IMR-90 (cell line): ENCODE measurements at regions of chr4 and their contacts with region 1.

Region 1: DNA sequence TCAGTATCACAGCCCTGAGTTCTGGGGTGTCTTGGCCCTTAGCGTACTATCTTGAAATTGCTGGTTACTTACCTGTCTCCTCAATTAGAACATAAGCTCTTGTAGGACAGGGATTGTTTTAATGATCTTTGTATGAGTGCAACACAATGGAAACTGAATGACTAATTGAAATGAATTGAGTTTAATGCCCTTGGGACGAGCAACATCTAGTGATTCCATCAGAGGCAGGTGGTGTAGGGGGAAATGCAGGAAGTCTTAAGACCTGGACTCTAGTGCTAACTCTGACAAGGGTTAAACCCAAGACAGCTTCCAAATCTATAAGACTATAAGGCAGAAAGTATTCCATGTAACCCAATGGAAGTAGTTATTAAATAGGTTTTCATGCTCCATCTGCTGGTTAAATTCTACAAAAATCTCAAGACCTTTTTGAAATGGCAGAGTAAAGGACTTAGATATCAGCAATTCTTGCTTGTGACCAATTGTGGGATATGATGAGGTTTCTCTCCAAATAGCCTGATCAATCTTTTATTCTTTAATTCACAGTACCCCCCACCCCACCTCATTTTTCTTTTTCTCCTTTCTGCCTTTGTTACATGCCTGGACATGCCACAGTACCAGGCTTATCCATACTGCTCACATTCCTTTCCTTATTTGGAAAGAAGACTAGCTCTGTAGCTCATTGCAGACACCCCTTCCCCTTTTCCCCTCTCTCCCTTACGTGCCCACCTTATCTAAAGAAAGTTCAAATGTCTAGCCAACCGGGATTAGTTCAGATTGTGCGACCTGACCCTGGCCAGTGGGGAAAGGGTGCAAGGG is 340.8 kb downstream of the PAPSS1 start:
- DNase-seq: peak; percentile 47
- ATAC-seq: peak; percentile 80
- H3K4me3 ChIP-seq: no peak overlapping the region
- H3K27ac ChIP-seq: peak overlapping the region; percentile 35; the same call in 1 of the 2 replicates
- H3K4me1 ChIP-seq: peaks cover 5% of the 10 kb centered on the region
- H3K27me3 ChIP-seq: no peaks in the 10 kb centered on the region
- CTCF ChIP-seq: peak; percentile 27; the same call in 1 of the 2 replicates
- POLR2A ChIP-seq: no peak
- RAD21 ChIP-seq: 0 out of 2 replicates have a peak, but pooled peaks have one; percentile 26

Region 2: DNA sequence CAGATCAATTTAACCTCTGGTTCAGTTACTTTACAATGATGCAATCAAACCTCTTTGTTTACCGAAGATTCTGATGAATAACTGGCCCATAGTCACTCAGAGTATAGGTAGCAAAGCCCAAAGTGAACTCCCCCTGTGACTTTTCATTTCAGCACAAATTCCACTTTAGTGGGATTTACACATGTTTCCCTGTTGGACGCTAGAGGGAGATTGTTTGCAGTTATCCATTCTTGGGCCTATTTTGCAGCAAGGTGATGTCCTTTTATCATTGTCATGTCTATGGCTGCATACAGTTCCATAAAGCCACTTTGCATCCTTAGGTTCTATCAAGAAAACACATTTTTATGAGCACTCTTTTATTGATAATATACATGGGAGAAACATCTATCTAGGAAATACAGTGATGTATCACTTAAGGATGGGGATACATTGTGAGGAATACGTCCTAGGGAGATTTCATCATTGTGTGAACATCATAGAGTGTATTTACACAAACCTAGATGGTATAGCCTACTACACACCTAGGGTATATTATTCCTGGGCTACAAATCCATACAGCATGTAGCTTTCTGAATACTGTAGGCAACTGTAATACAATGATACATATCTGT is 328.6 kb before region 1 on chr4:
- CTCF ChIA-PET with region 1: no interaction called
- POLR2A ChIA-PET with region 1: no interaction called
- dilution Hi-C with region 1: no loop called
- in situ Hi-C with region 1: no loop called
- intact Hi-C with region 1: loop called (anchors 5 kb)
- DNase-seq: peak; percentile 10
- ATAC-seq: no peak
- H3K4me3 ChIP-seq: no peak overlapping the region
- H3K27ac ChIP-seq: no peak overlapping the region
- H3K4me1 ChIP-seq: no peaks in the 10 kb centered on the region
- H3K27me3 ChIP-seq: no peaks in the 10 kb centered on the region
- CTCF ChIP-seq: peak; percentile 48
- POLR2A ChIP-seq: no peak
- RAD21 ChIP-seq: peak; percentile 43

Region 3: DNA sequence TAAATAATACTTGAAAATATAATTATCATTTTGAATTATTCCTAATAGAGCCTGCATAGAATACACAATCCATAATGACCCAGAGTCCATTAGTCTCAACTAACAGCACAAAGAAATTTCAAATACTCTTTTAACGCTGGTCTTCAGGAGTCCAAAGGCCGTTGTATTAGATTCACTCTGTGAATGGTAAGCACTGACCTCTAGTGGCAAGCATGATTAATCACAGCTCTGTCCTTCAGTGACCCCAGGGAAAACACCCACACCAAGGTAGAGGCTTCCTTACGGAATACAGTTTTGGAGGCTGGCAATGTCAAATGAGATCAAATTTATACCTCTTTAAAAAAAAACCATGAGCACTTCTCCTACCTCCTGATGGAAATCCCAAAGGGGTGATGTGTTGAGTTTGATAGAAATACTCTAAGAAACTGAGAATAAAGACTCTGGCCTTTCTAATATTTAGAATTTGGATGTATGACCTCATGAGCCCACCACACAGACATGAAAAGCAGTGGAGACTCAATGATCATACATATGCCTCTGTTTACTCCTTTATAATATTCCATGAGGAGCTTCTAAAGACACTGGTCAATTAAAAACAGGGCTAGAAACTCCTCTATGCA is 196.0 kb before region 1 on chr4:
- CTCF ChIA-PET with region 1: no interaction called
- POLR2A ChIA-PET with region 1: no interaction called
- dilution Hi-C with region 1: no loop called
- in situ Hi-C with region 1: no loop called
- intact Hi-C with region 1: loop called (anchors 5 kb)
- DNase-seq: peak; percentile 58
- ATAC-seq: peak; percentile 98
- H3K4me3 ChIP-seq: no peak overlapping the region
- H3K27ac ChIP-seq: no peak overlapping the region
- H3K4me1 ChIP-seq: no peaks in the 10 kb centered on the region
- H3K27me3 ChIP-seq: 0 out of 2 replicates have a peak, but pooled peaks cover 1% of the 10 kb centered on the region
- CTCF ChIP-seq: peak; percentile 76
- POLR2A ChIP-seq: no peak
- RAD21 ChIP-seq: peak; percentile 63

Region 4: DNA sequence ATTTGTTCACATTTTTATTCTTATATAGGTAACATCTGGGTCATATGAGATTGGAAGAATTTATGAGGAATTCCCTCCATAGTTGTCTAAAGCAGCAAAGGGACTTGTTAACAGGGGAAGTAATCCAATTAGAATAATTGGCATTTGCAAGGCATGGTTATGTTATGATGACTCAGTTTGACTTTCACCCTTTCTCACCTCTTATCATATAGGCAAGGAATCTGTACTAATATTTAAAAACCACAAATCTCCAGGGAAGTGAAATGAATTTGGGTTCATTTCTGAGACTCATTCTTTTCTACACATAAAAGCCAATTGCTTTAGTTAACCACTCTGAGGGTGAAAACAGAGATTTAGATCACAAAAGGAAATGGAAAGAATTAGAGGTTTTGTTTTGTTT is 61.7 kb before region 1 on chr4:
- CTCF ChIA-PET with region 1: no interaction called
- POLR2A ChIA-PET with region 1: no interaction called
- dilution Hi-C with region 1: no loop called
- in situ Hi-C with region 1: no loop called
- intact Hi-C with region 1: loop called (anchors 10 kb)
- DNase-seq: no peak
- ATAC-seq: no peak
- H3K4me3 ChIP-seq: no peak overlapping the region
- H3K27ac ChIP-seq: no peak overlapping the region
- H3K4me1 ChIP-seq: no peaks in the 10 kb centered on the region
- H3K27me3 ChIP-seq: 0 out of 2 replicates have a peak, but pooled peaks cover 3% of the 10 kb centered on the region
- CTCF ChIP-seq: no peak
- POLR2A ChIP-seq: no peak
- RAD21 ChIP-seq: no peak

Region 5: GRCh38 chr4:107392951-107393350 is 13.7 kb after region 1 on chr4:
- CTCF ChIA-PET with region 1: no interaction called
- POLR2A ChIA-PET with region 1: interaction called, 12 read pairs
- dilution Hi-C with region 1: no loop called
- in situ Hi-C with region 1: no loop called
- intact Hi-C with region 1: no loop called
- DNase-seq: peak; percentile 1
- ATAC-seq: peak; percentile 61
- H3K4me3 ChIP-seq: no peak overlapping the region
- H3K27ac ChIP-seq: no peak overlapping the region
- H3K4me1 ChIP-seq: no peaks in the 10 kb centered on the region
- H3K27me3 ChIP-seq: no peaks in the 10 kb centered on the region
- CTCF ChIP-seq: no peak
- POLR2A ChIP-seq: no peak
- RAD21 ChIP-seq: no peak

Region 6: GRCh38 chr4:107736924-107737448 is 357.7 kb after region 1 on chr4:
- CTCF ChIA-PET with region 1: no interaction called
- POLR2A ChIA-PET with region 1: no interaction called
- dilution Hi-C with region 1: no loop called
- in situ Hi-C with region 1: no loop called
- intact Hi-C with region 1: loop called (anchors 10 kb)
- DNase-seq: peak; percentile 57
- ATAC-seq: peak; percentile 73
- H3K4me3 ChIP-seq: no peak overlapping the region
- H3K27ac ChIP-seq: no peak overlapping the region
- H3K4me1 ChIP-seq: peaks cover 8% of the 10 kb centered on the region
- H3K27me3 ChIP-seq: peaks cover 4% of the 10 kb centered on the region; the same call in 1 of the 2 replicates
- CTCF ChIP-seq: peak; percentile 70
- POLR2A ChIP-seq: no peak
- RAD21 ChIP-seq: peak; percentile 83